ENCODE measurements at regions of chr16 and their contacts with region 1.

Region 1: GRCh38 chr16:65121870-65122723 is at the start of gene CDH11:
- DNase-seq: no peak
- H3K4me3 ChIP-seq: peak within 1 kb of the TSS; percentile 30 to 72 (median 52)
- H3K27ac ChIP-seq: peak within 1 kb of the TSS; percentile 70 to 92 (median 85)
- H3K4me1 ChIP-seq: peaks cover 4 to 61% (median 13%) of the 10 kb centered on the region in 3 donors
- H3K27me3 ChIP-seq: peaks cover 0 to 57% (median 2%) of the 10 kb centered on the region in 4 donors
- CTCF ChIP-seq: peak in 1 of 6 experiments; percentile 26
- POLR2A ChIP-seq: peak in 2 of 4 donors; percentile 20 to 48
- total RNA-seq, gene CDH11: 3.4 to 17.5 (median 6.6) TPM

Region 2: DNA sequence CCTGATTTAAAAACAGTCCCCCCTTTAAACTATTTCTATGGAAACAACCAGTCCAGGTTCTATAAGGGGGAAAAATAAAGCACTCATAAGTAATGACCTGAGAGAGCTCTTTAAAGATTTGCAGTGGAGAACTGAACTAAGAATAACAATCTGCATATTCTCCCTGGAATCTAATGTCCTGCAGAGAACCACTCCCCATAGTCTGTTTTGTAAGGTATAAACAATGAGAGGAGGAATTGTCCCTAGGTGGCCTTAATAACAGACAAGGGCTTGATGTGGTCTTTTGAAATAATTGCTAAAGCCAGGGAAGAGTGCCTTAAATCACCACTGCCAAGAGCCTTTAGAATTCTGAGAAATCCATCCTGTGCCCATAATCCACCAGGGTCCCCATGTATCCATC is 106.5 kb before region 1 on chr16:
- intact Hi-C with region 1: no loop called
- DNase-seq: no peak
- H3K4me3 ChIP-seq: no peak overlapping the region
- H3K27ac ChIP-seq: no peak overlapping the region
- H3K4me1 ChIP-seq: no peaks in the 10 kb centered on the region
- H3K27me3 ChIP-seq: no peaks in the 10 kb centered on the region
- CTCF ChIP-seq: no peak
- POLR2A ChIP-seq: no peak

Region 3: DNA sequence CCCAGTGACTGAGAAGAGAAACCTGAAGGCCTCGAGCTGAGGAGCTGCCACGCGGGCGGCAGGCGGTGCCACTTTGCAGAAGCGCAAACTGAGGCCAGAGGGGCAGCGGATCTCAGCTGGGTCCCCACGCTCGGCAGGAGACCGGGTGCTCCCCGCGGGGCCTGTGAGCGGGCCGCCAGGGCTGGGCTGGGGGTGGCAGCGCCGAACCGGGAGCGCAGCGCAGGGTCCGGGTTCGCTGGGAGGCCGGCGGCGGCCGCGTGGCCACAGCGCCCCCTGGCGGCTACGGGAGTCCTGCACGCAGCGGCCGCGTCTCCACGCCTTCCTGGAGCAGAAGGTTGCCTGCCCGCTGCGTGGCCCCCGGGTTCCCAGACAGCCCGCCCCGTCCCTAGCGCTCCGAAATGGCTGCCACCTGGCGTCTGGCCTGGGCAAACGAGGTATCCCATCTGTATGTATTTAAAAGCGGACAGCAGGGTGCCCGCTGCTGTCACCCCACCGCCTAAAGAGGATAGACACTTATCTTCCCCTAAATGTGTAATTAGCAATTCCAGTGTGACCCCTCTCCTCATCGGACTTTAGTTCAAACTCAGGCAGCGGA is 1148.3 kb after region 1 on chr16:
- intact Hi-C with region 1: loop called (anchors 5 kb)
- DNase-seq: no peak
- H3K4me3 ChIP-seq: peak overlapping the region; percentile 12 to 57 (median 30)
- H3K27ac ChIP-seq: peak overlapping the region in 3 of 4 donors; percentile 7 to 53 (median 24)
- H3K4me1 ChIP-seq: peaks cover 10 to 78% (median 30%) of the 10 kb centered on the region in 3 donors
- H3K27me3 ChIP-seq: peaks cover 0 to 14% (median 0%) of the 10 kb centered on the region in 4 donors
- CTCF ChIP-seq: peak; percentile 93 to 97 (median 95)
- POLR2A ChIP-seq: no peak